Transverse colon (tissue), 4 donors: ENCODE measurements at regions of chr3 and their contacts with region 1.

Region 1: DNA sequence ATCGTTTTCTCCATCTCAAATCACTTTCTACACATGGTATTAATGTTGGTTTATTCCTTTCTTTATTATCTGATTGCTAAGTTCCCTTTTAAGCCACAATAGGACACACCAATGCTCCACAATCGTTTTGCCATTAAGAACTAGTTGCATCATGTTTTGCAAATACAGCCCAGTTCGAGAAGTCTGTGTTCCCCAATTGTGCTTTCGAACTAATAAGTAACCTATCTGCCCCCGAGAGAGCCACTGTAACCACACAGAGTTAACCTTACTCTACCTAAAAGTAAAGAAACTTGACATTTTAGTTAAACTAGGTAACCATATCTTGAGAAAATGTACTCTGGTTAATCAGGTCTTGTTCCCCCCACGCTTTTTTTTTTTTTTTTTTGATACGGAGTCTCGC is 39.1 kb downstream of the MAGI1 start:
- DNase-seq: no peak
- H3K4me3 ChIP-seq: no peak overlapping the region
- H3K27ac ChIP-seq: no peak overlapping the region
- H3K4me1 ChIP-seq: no peaks in the 10 kb centered on the region
- H3K27me3 ChIP-seq: no peaks in the 10 kb centered on the region
- CTCF ChIP-seq: no peak
- EP300 ChIP-seq: no peak
- POLR2A ChIP-seq: no peak

Region 2: GRCh38 chr3:65928110-65928509 is 71.5 kb before region 1 on chr3:
- in situ Hi-C with region 1: no loop called
- intact Hi-C with region 1: loop called (anchors 2 kb)
- DNase-seq: no peak
- H3K4me3 ChIP-seq: no peak overlapping the region
- H3K27ac ChIP-seq: no peak overlapping the region
- H3K4me1 ChIP-seq: peaks cover 0 to 15% (median 0%) of the 10 kb centered on the region in 4 donors
- H3K27me3 ChIP-seq: no peaks in the 10 kb centered on the region
- CTCF ChIP-seq: no peak
- EP300 ChIP-seq: no peak
- POLR2A ChIP-seq: no peak